Calu3 (cell line): ENCODE measurements at regions of chr12 and their contacts with region 1.

Region 1: GRCh38 chr12:67655829-67656228 is 7.3 kb downstream of the DYRK2 start:
- DNase-seq: no peak
- H3K4me3 Mint-ChIP-seq: no peak overlapping the region
- H3K27ac Mint-ChIP-seq: no peak overlapping the region
- H3K4me1 Mint-ChIP-seq: peaks cover 48% of the 10 kb centered on the region
- H3K27me3 Mint-ChIP-seq: no peaks in the 10 kb centered on the region
- CTCF ChIP-seq: no peak

Region 2: DNA sequence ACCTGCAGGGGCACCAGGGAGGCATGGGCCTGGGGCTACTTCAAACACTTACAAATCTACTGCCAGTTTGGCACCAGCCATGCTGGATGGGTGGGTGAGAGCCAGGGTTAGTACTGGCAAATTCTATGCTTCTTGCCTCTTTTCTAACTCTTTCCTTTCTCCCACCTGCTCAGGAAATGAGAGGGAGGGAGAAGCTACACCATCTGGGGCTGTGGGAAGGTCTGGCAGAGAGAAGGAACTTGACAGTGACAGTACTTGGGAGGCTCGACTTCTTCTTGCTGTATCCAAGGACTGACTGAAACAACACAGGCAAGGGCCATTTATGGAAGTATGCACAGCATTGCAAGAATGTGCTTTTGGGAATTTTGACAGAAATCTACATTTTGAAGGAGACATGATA is 156.8 kb before region 1 on chr12:
- CTCF ChIA-PET with region 1: no interaction called
- intact Hi-C with region 1: no loop called
- DNase-seq: no peak
- H3K4me3 Mint-ChIP-seq: no peak overlapping the region
- H3K27ac Mint-ChIP-seq: no peak overlapping the region
- H3K4me1 Mint-ChIP-seq: peaks cover 51% of the 10 kb centered on the region
- H3K27me3 Mint-ChIP-seq: no peaks in the 10 kb centered on the region
- CTCF ChIP-seq: no peak

Region 3: DNA sequence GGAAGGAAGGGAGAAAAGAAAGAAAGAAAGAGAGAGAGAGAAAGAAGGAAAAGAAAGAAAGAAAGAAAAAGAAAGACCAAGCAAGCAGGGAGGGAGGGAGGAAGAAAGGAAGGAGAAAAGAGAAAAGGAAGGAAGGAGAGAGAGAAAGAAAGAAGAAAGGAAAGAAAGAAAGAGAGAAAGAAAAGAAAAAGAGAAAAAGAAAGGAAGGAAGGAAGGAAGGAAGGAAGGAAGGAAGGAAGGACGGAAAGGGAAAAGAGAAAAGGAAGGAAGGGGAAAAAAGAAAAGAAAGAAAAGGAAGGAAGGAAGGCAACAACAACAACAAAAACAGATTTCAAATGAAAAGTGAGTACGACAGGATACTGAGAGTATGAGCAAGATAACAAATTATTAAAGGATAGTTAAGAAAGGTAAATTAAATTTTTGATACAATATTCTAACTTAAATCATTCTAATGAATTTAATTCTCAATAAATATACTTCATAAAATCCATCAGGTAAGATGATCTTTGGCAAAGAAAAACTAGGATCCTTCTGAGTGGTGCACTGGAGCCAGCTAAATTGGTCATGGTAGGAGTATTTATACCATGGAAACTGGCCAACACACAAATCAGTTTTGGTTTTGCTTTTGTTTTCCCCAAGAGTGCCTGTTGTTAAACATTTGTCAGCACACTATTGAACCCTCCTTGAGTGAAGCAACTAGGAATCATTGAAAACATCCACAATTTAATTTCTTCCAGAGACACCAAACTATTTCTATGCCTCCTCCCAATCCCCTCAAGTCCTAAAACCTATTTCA is 63.4 kb before region 1 on chr12:
- CTCF ChIA-PET with region 1: no interaction called
- intact Hi-C with region 1: no loop called
- DNase-seq: peak; percentile 45
- H3K4me3 Mint-ChIP-seq: peak overlapping the region; percentile 13
- H3K27ac Mint-ChIP-seq: peak overlapping the region; percentile 82
- H3K4me1 Mint-ChIP-seq: peaks cover 47% of the 10 kb centered on the region
- H3K27me3 Mint-ChIP-seq: no peaks in the 10 kb centered on the region
- CTCF ChIP-seq: no peak

Region 4: DNA sequence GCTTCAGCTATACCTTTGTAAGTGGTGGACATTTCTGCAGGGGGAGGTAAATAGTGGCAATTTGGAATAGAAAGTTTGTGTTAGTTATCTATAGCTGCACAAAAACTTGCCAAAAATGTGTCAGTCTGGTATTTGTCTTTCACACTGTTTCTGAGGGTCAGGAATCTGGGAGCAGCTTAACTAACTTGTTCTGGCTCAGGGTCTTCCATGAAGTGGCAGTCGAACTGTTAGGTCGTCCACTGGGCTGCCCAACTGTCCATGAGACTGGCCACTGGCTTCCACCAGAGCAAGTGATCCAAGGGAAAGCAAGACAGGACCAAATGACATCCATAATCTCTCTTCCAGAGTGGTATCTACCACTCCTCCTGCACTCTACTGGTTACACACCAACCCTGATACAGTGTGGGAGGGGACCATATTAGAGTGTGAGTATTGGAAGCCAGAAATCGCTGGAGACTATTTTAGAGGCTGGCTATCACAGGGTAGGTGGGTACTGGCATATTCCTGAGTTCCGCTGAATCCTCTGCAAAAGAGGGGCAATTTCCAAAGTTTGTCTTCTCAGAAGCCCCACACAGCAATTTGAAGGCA is 53.6 kb after region 1 on chr12:
- CTCF ChIA-PET with region 1: no interaction called
- intact Hi-C with region 1: loop called (anchors 2 kb)
- DNase-seq: no peak
- H3K4me3 Mint-ChIP-seq: no peak overlapping the region
- H3K27ac Mint-ChIP-seq: no peak overlapping the region
- H3K4me1 Mint-ChIP-seq: peaks cover 31% of the 10 kb centered on the region
- H3K27me3 Mint-ChIP-seq: no peaks in the 10 kb centered on the region
- CTCF ChIP-seq: no peak

Region 5: DNA sequence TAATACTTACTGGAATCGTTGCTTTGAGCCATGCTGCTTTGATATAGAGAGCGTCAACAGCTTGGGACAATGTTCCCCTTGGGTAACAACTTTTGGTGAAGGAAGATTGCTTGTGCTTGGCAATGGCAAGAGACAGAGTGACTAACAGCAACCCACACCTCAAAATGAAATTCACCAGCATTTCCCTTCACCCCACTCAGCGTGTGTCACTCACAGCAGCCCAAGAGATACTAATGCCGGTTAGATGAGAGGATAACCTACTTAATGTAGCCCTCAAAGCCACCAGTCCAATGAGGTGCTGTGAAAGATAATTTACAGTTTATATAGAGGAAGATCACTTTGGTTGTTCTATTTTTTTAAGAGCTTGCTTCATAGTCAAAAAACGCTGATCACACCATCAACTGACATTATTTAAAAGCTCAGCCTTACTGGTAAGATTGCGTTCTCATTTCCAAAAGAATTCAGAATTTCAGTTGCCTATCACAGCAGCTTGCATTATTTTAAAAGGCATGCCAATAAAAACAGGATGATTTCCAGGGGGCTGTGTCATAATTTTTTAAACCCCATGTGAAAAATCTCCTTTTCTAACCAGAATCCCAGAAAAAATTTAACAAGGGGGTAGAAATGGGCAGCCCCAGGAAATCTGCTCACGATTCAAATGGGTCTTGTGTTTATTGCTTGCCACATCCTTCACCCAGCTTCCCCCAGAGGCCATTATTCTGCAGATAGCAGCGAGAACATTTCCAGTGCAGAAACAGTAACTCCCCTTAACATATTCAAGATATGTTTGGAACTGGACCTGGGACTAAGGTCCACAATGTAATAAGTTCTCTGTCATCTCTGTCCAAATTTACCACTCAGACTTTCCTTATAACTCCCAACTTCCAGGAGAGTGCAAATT is 570.0 kb after region 1 on chr12 and contains the start of gene IL26:
- CTCF ChIA-PET with region 1: no interaction called
- intact Hi-C with region 1: no loop called
- DNase-seq: no peak
- H3K4me3 Mint-ChIP-seq: no peak within 1 kb of the TSS
- H3K27ac Mint-ChIP-seq: no peak within 1 kb of the TSS
- H3K4me1 Mint-ChIP-seq: no peaks in the 10 kb centered on the region
- H3K27me3 Mint-ChIP-seq: peaks cover 39% of the 10 kb centered on the region
- CTCF ChIP-seq: no peak
- total RNA-seq, gene IL26: not detected in 2 replicates